ENCODE measurements at regions of chr17 and their contacts with region 1.

Region 1: DNA sequence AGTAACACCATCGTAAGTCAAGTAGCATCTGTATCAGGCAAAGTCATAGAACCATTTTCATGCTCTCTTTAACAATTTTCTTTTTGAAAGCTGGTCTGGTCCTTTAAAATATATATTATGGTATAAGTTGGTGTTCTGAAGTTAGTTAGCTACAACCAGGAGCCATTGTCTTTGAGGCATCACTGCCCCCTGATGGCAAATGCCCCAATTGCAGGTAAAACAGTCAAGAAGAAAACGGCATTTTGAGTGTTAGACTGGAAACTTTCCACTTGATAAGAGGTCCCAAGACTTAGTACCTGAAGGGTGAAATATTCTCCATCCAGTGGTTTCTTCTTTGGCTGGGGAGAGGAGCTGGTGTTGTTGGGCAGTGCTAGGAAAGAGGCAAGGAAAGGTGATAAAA is 14.1 kb downstream of the TP53 start:
- H3K4me3 ChIP-seq: no peak overlapping the region
- H3K27ac ChIP-seq: no peak overlapping the region
- H3K4me1 ChIP-seq: no peaks in the 10 kb centered on the region
- CTCF ChIP-seq: 0 out of 2 replicates have a peak, but pooled peaks have one; percentile 7

Region 2: DNA sequence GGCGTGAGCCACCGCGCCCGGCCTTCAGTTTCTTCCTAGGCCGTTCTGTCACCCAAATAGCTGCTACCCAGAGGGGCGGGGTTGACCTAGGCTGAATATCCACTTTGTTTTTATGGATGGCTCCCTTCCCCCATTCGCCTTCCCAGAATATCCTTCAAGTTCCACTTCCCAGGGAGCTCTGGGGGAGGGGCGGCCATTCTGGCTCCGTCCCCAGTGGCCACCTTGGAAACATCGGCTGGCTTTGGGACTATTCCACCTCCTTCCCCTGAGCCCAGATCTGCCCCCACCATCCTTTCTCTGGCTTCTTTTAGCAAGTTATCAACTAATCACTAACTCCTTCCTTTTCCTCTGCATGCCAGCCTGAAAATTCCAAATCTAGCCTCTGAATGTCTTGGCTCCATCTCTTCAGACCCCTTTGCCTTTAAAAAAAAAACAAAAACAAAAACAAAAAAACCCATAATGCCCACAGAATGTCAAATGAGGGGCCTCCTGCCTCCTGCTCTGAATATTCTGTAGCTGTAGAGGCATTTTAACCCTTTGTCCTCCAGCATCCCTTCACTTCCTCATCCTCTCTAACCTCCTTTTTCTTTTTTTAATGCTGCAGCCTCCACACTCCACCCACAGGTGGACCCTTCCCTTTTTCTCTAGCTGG is 16.2 kb before region 1 on chr17:
- CTCF ChIA-PET with region 1: interaction called, 17 read pairs
- POLR2A ChIA-PET with region 1: interaction called, 5 read pairs
- H3K4me3 ChIP-seq: no peak overlapping the region
- H3K27ac ChIP-seq: peak overlapping the region; percentile 37; the same call in 1 of the 2 replicates
- H3K4me1 ChIP-seq: peaks cover 7% of the 10 kb centered on the region; the same call in 1 of the 2 replicates
- CTCF ChIP-seq: 0 out of 2 replicates have a peak, but pooled peaks have one; percentile 32

Measured in HEK293 (cell line).